ENCODE measurements at regions of chr3 and their contacts with region 1.

Region 1: GRCh38 chr3:127959846-127960245 is 44.8 kb downstream of the KBTBD12 start:
- DNase-seq: peak; percentile 33 to 58 (median 53)
- H3K4me3 ChIP-seq: no peak overlapping the region
- H3K27ac ChIP-seq: no peak overlapping the region
- H3K4me1 ChIP-seq: no peaks in the 10 kb centered on the region
- H3K27me3 ChIP-seq: no peaks in the 10 kb centered on the region

Region 2: GRCh38 chr3:127574880-127575878 is 384.7 kb before region 1 on chr3:
- CTCF ChIA-PET with region 1: interaction called, 14 read pairs
- POLR2A ChIA-PET with region 1: no interaction called
- DNase-seq: peak; percentile 85 to 94 (median 91)
- H3K4me3 ChIP-seq: peak overlapping the region in 1 of 7 experiments; percentile 8
- H3K27ac ChIP-seq: no peak overlapping the region
- H3K4me1 ChIP-seq: peaks cover 0 to 9% (median 6%) of the 10 kb centered on the region in 4 experiments
- H3K27me3 ChIP-seq: no peaks in the 10 kb centered on the region

Region 3: DNA sequence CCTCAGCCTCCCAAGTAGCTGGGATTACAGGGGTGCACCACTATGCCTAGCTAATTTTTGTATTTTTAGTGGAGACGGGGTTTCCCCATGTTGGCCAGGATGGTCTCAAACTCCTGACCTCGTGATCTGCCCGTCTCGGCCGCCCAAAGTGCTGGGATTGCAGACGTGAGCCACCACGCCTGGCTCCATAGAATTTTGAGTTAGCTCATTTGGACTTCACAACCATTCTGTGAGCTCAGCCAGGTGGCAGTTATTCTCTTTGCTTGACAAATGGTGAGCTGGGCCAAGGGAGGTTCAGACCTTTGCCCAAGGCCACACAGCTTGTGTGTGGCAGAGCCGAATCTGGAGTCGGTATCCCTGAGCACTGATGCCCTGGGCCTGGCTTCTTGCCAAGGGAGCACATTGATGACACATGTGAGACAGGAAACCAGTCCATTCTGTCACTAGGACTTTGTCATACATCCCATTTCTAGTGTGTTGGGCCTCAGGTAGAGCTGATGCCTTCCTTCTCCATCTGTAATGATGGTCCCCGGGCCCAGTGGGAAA is 313.3 kb before region 1 on chr3:
- CTCF ChIA-PET with region 1: interaction called, 12 read pairs
- POLR2A ChIA-PET with region 1: no interaction called
- DNase-seq: no peak
- H3K4me3 ChIP-seq: no peak overlapping the region
- H3K27ac ChIP-seq: no peak overlapping the region
- H3K4me1 ChIP-seq: no peaks in the 10 kb centered on the region
- H3K27me3 ChIP-seq: no peaks in the 10 kb centered on the region

Region 4: DNA sequence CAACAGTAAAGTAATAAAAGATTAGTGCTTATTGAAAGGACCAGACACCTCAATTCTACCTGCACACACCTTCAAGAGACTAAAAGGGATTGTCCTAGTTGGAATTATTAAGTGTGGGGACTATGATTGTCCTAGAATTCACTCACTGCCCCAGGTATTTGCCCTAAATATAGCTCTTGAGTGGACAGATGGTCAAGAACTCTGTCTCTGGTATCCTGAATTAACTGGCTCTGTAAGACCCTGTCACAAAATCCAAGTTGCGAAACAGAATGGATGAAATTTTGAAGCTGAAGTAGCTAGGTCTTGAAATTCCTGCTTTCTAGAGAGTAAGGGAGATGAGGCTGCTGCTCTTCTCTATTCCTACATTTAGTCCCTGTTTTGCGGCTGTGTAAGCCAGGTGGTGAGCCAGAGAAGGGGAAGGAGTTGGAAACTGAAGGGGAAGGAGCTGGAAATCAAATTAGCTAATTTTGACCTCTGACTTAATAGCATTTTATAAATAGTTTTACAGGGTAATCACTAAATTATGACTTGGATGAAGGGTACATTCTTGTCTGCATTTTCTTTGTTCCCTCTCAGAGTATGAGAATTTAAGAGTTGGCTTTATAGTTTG is 10.3 kb before region 1 on chr3:
- CTCF ChIA-PET with region 1: interaction called, 10 read pairs
- POLR2A ChIA-PET with region 1: interaction called, 3 read pairs
- DNase-seq: no peak
- H3K4me3 ChIP-seq: no peak overlapping the region
- H3K27ac ChIP-seq: no peak overlapping the region
- H3K4me1 ChIP-seq: no peaks in the 10 kb centered on the region
- H3K27me3 ChIP-seq: no peaks in the 10 kb centered on the region

Measured in common myeloid progenitor, CD34-positive (primary cell).